ENCODE measurements at regions of chr17 and their contacts with region 1.

Region 1: GRCh38 chr17:34637548-34638525 is 58.5 kb downstream of the TMEM132E start:
- DNase-seq: peak; percentile 56
- ATAC-seq: peak; percentile 99
- H3K4me3 ChIP-seq: no peak overlapping the region
- H3K27ac ChIP-seq: no peak overlapping the region
- H3K4me1 ChIP-seq: no peaks in the 10 kb centered on the region
- H3K27me3 ChIP-seq: peaks cover 11% of the 10 kb centered on the region; the same call in 1 of the 2 replicates
- CTCF ChIP-seq: peak; percentile 80
- POLR2A ChIP-seq: no peak
- RAD21 ChIP-seq: peak; percentile 54

Region 2: GRCh38 chr17:34420254-34420766 is 217.5 kb before region 1 on chr17:
- CTCF ChIA-PET with region 1: no interaction called
- POLR2A ChIA-PET with region 1: no interaction called
- dilution Hi-C with region 1: no loop called
- in situ Hi-C with region 1: loop called (anchors 5 kb)
- intact Hi-C with region 1: loop called (anchors 1 kb)
- DNase-seq: peak; percentile 46
- ATAC-seq: peak; percentile 95
- H3K4me3 ChIP-seq: no peak overlapping the region
- H3K27ac ChIP-seq: no peak overlapping the region
- H3K4me1 ChIP-seq: no peaks in the 10 kb centered on the region
- H3K27me3 ChIP-seq: peaks cover 27% of the 10 kb centered on the region
- CTCF ChIP-seq: peak; percentile 85
- POLR2A ChIP-seq: no peak
- RAD21 ChIP-seq: peak; percentile 91

Region 3: DNA sequence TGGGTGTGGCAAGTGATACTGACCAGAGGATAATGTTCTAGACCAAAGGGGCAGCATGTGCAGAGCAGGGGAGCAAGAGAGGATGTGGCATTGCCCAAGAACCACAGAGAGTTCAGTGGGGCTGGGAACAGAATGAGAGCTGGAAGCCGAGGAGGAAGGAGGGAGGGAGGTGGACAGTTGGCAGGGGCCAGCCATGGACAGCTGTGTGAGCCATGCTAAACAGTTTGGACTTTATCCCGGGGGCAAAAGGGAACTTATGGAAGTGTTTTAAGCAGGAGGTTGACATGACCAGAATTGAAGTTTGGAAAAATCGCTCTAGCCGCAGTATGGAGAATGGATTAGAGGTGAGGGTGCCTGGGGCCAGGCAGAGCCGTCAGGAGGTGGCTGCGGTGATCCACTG is 87.9 kb before region 1 on chr17:
- CTCF ChIA-PET with region 1: no interaction called
- POLR2A ChIA-PET with region 1: no interaction called
- dilution Hi-C with region 1: no loop called
- in situ Hi-C with region 1: no loop called
- intact Hi-C with region 1: no loop called
- DNase-seq: no peak
- ATAC-seq: no peak
- H3K4me3 ChIP-seq: no peak overlapping the region
- H3K27ac ChIP-seq: no peak overlapping the region
- H3K4me1 ChIP-seq: no peaks in the 10 kb centered on the region
- H3K27me3 ChIP-seq: no peaks in the 10 kb centered on the region; the same call in 1 of the 2 replicates
- CTCF ChIP-seq: no peak
- POLR2A ChIP-seq: no peak
- RAD21 ChIP-seq: no peak